ENCODE measurements at regions of chr15 and their contacts with region 1.

Region 1: GRCh38 chr15:52261498-52262242 is 33.9 kb downstream of the MYO5C start:
- DNase-seq: peak in 1 of 4 experiments; percentile 7
- ATAC-seq: peak; percentile 69; the same call in 2 of the 3 replicates
- H3K4me3 ChIP-seq: no peak overlapping the region
- H3K27ac ChIP-seq: no peak overlapping the region
- H3K4me1 ChIP-seq: no peaks in the 10 kb centered on the region
- H3K27me3 ChIP-seq: peaks cover 23 to 63% of the 10 kb centered on the region in 2 experiments; a peak in 4 of 5 replicates
- CTCF ChIP-seq: no peak
- EP300 ChIP-seq: no peak
- POLR2A ChIP-seq: no peak
- RAD21 ChIP-seq: no peak

Region 2: GRCh38 chr15:52246686-52247431 is 14.8 kb before region 1 on chr15:
- CTCF ChIA-PET with region 1: no interaction called
- POLR2A ChIA-PET with region 1: no interaction called
- in situ Hi-C with region 1: no loop called
- intact Hi-C with region 1: no loop called
- DNase-seq: no peak
- ATAC-seq: no peak
- H3K4me3 ChIP-seq: no peak overlapping the region
- H3K27ac ChIP-seq: no peak overlapping the region
- H3K4me1 ChIP-seq: no peaks in the 10 kb centered on the region
- H3K27me3 ChIP-seq: peaks cover 36 to 55% of the 10 kb centered on the region in 2 experiments
- CTCF ChIP-seq: no peak
- EP300 ChIP-seq: no peak
- POLR2A ChIP-seq: no peak
- RAD21 ChIP-seq: no peak

Region 3: GRCh38 chr15:52518490-52519371 is 257.1 kb after region 1 on chr15:
- CTCF ChIA-PET with region 1: no interaction called
- POLR2A ChIA-PET with region 1: interaction called, 4 read pairs
- in situ Hi-C with region 1: no loop called
- intact Hi-C with region 1: loop called (anchors 5 kb)
- DNase-seq: no peak
- ATAC-seq: no peak
- H3K4me3 ChIP-seq: no peak overlapping the region
- H3K27ac ChIP-seq: no peak overlapping the region
- H3K4me1 ChIP-seq: no peaks in the 10 kb centered on the region
- H3K27me3 ChIP-seq: peaks cover 5 to 10% of the 10 kb centered on the region in 2 experiments
- CTCF ChIP-seq: no peak
- EP300 ChIP-seq: no peak
- POLR2A ChIP-seq: no peak
- RAD21 ChIP-seq: no peak

Region 4: DNA sequence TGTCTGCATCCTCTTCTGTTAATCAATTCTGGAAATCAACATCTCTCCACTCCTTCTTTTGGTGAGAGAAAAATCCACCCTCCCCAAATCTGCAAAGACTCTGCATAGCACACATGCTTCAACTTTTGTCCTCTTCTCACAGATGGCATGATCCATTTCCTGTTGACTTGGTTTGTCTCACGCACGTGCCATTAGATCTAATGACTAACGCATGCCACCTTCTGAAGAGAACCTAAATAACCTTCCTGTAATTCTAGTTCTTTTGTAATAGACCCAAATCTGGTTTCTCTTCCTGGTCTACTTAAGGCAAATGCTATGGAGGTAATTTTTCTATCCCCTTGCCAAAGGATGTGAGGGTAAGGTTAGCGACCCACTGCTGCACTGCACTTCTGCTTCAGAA is 468.5 kb after region 1 on chr15:
- CTCF ChIA-PET with region 1: interaction called, 21 read pairs
- POLR2A ChIA-PET with region 1: interaction called, 3 read pairs
- in situ Hi-C with region 1: loop called (anchors 5 kb)
- intact Hi-C with region 1: loop called (anchors 1 kb)
- DNase-seq: no peak
- ATAC-seq: no peak
- H3K4me3 ChIP-seq: no peak overlapping the region
- H3K27ac ChIP-seq: no peak overlapping the region
- H3K4me1 ChIP-seq: no peaks in the 10 kb centered on the region
- H3K27me3 ChIP-seq: peaks cover 0 to 4% of the 10 kb centered on the region in 2 experiments; a peak in 2 of 5 replicates
- CTCF ChIP-seq: no peak
- EP300 ChIP-seq: no peak
- POLR2A ChIP-seq: no peak
- RAD21 ChIP-seq: no peak

Region 5: DNA sequence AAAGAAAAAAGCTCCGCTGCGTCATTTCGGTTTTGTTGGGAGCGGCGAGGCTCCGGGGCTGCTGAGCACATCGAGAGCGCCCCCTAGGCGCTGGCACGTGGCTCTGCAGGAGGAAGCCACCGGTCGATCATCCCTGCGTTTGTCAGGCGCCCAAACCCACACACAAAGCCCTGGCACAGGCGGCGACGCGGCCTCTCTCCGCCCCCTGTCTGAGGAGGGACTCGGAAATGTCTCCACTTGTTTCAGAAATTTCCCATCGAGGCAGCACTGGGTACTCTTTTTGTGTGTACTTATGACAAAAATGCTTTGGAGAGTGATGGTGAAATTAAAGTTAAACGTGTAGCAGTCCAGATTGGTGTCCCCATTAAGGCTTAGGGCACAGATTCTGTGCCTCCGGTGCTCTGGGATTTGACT is 935.8 kb after region 1 on chr15:
- CTCF ChIA-PET with region 1: no interaction called
- POLR2A ChIA-PET with region 1: no interaction called
- in situ Hi-C with region 1: loop called (anchors 25 kb)
- intact Hi-C with region 1: no loop called
- DNase-seq: peak; percentile 56 to 65 (median 63)
- ATAC-seq: peak; percentile 89
- H3K4me3 ChIP-seq: no peak overlapping the region
- H3K27ac ChIP-seq: no peak overlapping the region
- H3K4me1 ChIP-seq: no peaks in the 10 kb centered on the region
- H3K27me3 ChIP-seq: no peaks in the 10 kb centered on the region
- CTCF ChIP-seq: peak; percentile 68 to 87 (median 73)
- EP300 ChIP-seq: no peak
- POLR2A ChIP-seq: no peak
- RAD21 ChIP-seq: peak; percentile 34 to 67; a peak in 3 of 4 replicates